ENCODE measurements at regions of chr16 and their contacts with region 1.

Region 1: DNA sequence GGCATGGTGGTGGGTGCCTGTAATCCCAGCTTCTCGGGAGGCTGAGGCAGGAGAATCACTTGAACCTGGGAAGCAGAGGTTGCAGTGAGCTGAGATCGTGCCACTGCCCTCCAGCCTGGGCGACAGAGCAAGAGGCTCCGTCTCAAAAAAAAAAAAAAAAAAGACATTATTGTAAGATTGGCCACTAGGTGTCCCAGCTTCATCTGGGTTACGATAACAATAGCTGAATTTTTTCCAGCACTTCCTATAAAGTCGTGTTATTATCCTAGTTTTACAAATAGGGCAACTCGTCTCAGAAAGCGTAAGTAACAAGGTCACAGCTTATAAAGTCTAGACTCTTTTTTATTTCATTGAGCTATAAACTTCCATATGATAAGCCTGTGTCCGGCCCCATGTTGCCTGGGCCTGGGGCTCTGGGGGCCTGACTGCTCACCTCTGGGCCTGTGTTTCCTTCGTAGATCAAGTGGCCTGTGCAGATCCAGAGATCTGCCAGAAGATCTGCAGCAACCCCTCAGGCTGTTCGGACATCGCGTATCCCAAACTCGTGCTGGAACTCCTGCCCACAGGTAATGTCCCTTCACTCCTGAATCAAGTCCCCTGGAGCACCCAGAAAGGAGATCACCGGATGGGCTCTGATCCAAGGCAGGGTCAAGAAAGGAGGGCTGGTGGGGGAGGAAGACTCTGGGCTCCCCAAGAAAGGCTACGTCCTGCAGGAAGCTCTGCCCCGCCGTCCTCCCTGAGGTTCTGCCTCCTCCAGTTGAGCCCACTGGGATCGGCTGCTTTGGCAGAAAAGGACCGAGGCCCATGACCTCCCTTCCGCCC is 60.6 kb downstream of the SLC5A11 start:
- DNase-seq: no peak
- H3K4me3 ChIP-seq: no peak overlapping the region
- H3K27ac ChIP-seq: no peak overlapping the region
- H3K4me1 ChIP-seq: no peaks in the 10 kb centered on the region
- H3K27me3 ChIP-seq: no peaks in the 10 kb centered on the region; a peak in 1 of 7 replicates
- CTCF ChIP-seq: peak in 2 of 3 experiments; percentile 23 to 24; a peak in 2 of 4 replicates
- EP300 ChIP-seq: no peak
- POLR2A ChIP-seq: no peak
- RAD21 ChIP-seq: peak; percentile 15 to 35; a peak in 2 of 4 replicates

Region 2: DNA sequence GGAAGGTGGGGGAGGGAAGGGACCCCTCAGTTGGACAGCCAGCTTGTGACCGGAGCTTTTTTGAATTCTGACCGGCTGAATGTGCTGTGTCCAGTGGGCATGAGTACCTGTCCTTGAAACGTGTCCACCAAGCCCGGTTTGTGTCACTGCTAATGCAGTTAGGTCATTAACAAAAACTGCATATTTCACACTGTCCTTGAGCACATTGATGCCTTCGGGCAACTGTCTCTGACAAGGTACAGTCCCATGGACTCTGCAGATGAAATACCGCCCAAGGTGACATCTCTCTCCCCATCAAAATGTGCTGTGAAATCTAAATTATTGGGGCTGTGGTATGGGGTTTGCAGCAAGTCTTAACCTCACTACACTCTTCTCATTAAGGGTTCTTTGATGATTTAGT is 10.8 kb before region 1 on chr16:
- CTCF ChIA-PET with region 1: interaction called, 15 read pairs
- POLR2A ChIA-PET with region 1: no interaction called
- DNase-seq: no peak
- H3K4me3 ChIP-seq: no peak overlapping the region
- H3K27ac ChIP-seq: no peak overlapping the region
- H3K4me1 ChIP-seq: no peaks in the 10 kb centered on the region
- H3K27me3 ChIP-seq: no peaks in the 10 kb centered on the region
- CTCF ChIP-seq: no peak
- EP300 ChIP-seq: no peak
- POLR2A ChIP-seq: no peak
- RAD21 ChIP-seq: no peak

Region 3: GRCh38 chr16:24925163-24925562 is 18.8 kb after region 1 on chr16:
- CTCF ChIA-PET with region 1: interaction called, 13 read pairs
- POLR2A ChIA-PET with region 1: interaction called, 6 read pairs
- DNase-seq: no peak
- H3K4me3 ChIP-seq: no peak overlapping the region
- H3K27ac ChIP-seq: no peak overlapping the region
- H3K4me1 ChIP-seq: peaks cover 0 to 3% (median 2%) of the 10 kb centered on the region in 4 experiments; a peak in 4 of 7 replicates
- H3K27me3 ChIP-seq: no peaks in the 10 kb centered on the region
- CTCF ChIP-seq: no peak
- EP300 ChIP-seq: no peak
- POLR2A ChIP-seq: no peak
- RAD21 ChIP-seq: no peak

Region 4: DNA sequence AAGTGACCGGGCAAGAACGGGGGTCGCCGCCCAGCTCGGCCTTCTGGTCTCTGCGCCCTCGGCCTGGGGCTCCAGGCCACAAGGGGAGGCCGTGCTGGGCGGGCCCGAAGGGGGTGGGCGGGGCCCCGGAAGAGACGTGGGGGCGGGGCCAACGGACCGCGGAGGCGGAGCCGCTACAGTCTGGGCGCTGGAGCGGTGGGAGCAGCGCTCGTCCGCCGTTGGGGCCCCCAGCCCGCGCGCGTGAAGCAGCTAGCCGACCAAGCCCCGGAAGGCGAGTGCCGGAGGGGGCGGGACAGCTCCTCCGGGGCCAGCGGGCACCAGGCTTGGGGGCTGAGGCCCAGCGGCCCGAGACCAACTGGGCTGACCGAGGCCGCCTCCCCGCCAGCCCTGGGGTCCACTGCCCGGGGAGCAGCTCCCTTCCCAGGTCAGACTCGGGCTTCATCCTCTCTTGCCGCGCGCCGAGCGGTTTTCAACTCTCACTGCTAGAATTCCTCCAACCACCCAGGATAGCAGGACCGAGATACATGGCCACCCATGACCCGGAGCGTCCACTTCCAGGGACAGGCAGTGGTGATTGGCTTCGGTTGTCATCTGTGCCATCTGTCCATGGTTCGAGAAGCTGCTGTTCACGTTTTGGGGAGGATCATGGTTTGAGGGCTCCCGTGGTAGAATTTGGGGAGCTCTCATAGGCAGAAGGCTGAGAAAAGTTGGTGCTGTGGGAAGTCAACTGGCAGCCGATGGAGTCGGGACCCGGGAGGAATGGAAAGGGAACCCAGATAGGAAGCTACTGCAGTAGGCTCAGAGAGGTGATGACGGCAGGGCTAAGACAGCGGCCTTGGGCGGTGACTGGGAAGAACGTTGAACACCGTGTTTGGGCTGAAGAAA is 160.6 kb after region 1 on chr16:
- CTCF ChIA-PET with region 1: no interaction called
- POLR2A ChIA-PET with region 1: no interaction called
- DNase-seq: peak; percentile 38 to 89
- H3K4me3 ChIP-seq: peak overlapping the region; percentile 52 to 76 (median 59)
- H3K27ac ChIP-seq: no peak overlapping the region
- H3K4me1 ChIP-seq: peaks cover 0 to 3% (median 0%) of the 10 kb centered on the region in 4 experiments; a peak in 3 of 7 replicates
- H3K27me3 ChIP-seq: no peaks in the 10 kb centered on the region; a peak in 3 of 7 replicates
- CTCF ChIP-seq: no peak
- EP300 ChIP-seq: no peak
- POLR2A ChIP-seq: peak; percentile 35 to 72; a peak in 2 of 3 replicates
- RAD21 ChIP-seq: no peak

Measured in H1 (cell line).